CD8-positive, alpha-beta T cell (primary cell): ENCODE measurements at regions of chr3 and their contacts with region 1.

Region 1: DNA sequence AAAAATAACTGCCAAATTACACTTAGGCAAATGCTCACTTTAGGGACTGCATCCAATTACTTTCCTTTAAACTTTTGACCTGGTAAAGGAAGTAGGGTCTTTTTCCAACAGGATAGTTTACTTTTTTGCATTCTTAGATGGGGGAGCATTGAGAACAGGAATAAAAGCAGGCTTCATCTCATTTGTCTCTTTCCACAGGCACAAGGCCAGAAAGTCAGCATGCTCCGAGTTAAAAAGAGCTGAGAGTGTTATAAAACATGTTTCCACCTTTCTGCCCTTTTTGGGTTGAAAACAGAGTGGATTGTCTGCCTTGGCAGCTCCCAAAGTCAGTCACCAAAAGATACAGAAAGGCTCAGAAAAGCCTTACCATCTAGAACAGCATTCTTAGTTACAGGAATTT is 404.9 kb upstream of the ALCAM start:
- DNase-seq: no peak
- ATAC-seq: no peak
- H3K4me3 ChIP-seq: no peak overlapping the region
- H3K4me3 Mint-ChIP-seq: no peak overlapping the region
- H3K27ac ChIP-seq: no peak overlapping the region
- H3K27ac Mint-ChIP-seq: no peak overlapping the region
- H3K4me1 ChIP-seq: no peaks in the 10 kb centered on the region
- H3K4me1 Mint-ChIP-seq: no peaks in the 10 kb centered on the region
- H3K27me3 ChIP-seq: no peaks in the 10 kb centered on the region
- H3K27me3 Mint-ChIP-seq: no peaks in the 10 kb centered on the region
- CTCF ChIP-seq: no peak

Region 2: GRCh38 chr3:104734627-104735026 is 227.2 kb before region 1 on chr3:
- CTCF ChIA-PET with region 1: no interaction called
- POLR2A ChIA-PET with region 1: no interaction called
- intact Hi-C with region 1: no loop called
- DNase-seq: no peak
- ATAC-seq: no peak
- H3K4me3 ChIP-seq: no peak overlapping the region
- H3K4me3 Mint-ChIP-seq: no peak overlapping the region
- H3K27ac ChIP-seq: no peak overlapping the region
- H3K27ac Mint-ChIP-seq: no peak overlapping the region
- H3K4me1 ChIP-seq: no peaks in the 10 kb centered on the region
- H3K4me1 Mint-ChIP-seq: no peaks in the 10 kb centered on the region
- H3K27me3 ChIP-seq: no peaks in the 10 kb centered on the region
- H3K27me3 Mint-ChIP-seq: no peaks in the 10 kb centered on the region
- CTCF ChIP-seq: no peak

Region 3: GRCh38 chr3:104977719-104978118 is 15.9 kb after region 1 on chr3:
- CTCF ChIA-PET with region 1: no interaction called
- POLR2A ChIA-PET with region 1: no interaction called
- intact Hi-C with region 1: loop called in 1 of 2 experiments (anchors 1 kb)
- DNase-seq: no peak
- ATAC-seq: no peak
- H3K4me3 ChIP-seq: no peak overlapping the region
- H3K4me3 Mint-ChIP-seq: no peak overlapping the region
- H3K27ac ChIP-seq: no peak overlapping the region
- H3K27ac Mint-ChIP-seq: no peak overlapping the region
- H3K4me1 ChIP-seq: no peaks in the 10 kb centered on the region
- H3K4me1 Mint-ChIP-seq: no peaks in the 10 kb centered on the region
- H3K27me3 ChIP-seq: no peaks in the 10 kb centered on the region
- H3K27me3 Mint-ChIP-seq: no peaks in the 10 kb centered on the region
- CTCF ChIP-seq: no peak